ENCODE measurements at regions of chr1 and their contacts with region 1.

Region 1: DNA sequence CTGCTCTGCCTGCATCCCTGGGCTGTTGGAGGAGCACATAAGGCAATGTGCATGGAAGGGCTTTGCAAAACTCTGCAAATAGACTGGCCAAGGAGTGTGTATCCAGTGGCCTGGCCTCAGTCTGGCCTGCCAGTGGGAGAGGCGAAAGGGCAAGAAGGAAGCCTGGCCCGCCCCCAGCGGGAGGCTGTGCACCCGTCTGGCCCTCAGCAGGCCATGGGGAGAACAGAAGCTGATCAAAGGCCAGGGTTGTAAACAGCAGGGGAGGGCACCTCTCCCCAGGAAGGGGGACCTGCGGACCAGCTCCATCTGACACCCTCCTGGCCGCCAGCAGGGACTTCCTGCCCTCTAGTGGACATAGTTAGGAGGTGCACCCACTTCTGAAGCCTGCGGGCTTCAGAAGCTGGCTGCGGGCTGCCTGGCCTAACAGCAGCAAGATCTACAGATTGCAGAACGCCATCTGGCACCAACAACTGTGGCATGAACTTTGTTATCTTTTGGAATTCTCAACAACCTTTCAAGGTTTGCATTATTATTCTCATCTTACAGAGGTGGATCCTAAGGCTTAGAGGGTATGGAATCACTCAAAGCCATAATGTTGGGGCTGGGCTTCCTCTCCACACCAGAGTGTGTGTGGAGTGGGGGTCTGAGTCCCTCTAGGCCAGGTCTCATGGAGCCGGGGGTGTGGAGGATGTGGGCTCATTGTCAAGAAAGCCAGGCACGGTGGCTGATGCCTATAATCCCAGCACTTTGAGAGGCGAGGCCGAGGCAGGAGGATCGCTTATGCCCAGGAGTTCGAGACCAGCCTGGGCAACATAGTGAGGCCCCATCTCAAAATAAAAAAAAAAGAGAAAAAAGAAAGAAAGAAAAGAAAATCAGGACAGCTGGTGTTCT is 18.9 kb upstream of the CDK18 start:
- DNase-seq: peak; percentile 55
- H3K4me3 ChIP-seq: no peak overlapping the region
- H3K27ac ChIP-seq: no peak overlapping the region
- H3K4me1 ChIP-seq: no peaks in the 10 kb centered on the region
- H3K27me3 ChIP-seq: peaks cover 7 to 13% of the 10 kb centered on the region in 2 experiments
- CTCF ChIP-seq: peak; percentile 85 to 96
- POLR2A ChIP-seq: no peak

Region 2: GRCh38 chr1:204591594-204592051 is 894.0 kb before region 1 on chr1:
- CTCF ChIA-PET with region 1: no interaction called
- POLR2A ChIA-PET with region 1: no interaction called
- dilution Hi-C with region 1: no loop called
- intact Hi-C with region 1: no loop called
- DNase-seq: peak; percentile 24
- H3K4me3 ChIP-seq: no peak overlapping the region
- H3K27ac ChIP-seq: no peak overlapping the region
- H3K4me1 ChIP-seq: peaks cover 11% of the 10 kb centered on the region
- H3K27me3 ChIP-seq: no peaks in the 10 kb centered on the region
- CTCF ChIP-seq: no peak
- POLR2A ChIP-seq: no peak

Region 3: DNA sequence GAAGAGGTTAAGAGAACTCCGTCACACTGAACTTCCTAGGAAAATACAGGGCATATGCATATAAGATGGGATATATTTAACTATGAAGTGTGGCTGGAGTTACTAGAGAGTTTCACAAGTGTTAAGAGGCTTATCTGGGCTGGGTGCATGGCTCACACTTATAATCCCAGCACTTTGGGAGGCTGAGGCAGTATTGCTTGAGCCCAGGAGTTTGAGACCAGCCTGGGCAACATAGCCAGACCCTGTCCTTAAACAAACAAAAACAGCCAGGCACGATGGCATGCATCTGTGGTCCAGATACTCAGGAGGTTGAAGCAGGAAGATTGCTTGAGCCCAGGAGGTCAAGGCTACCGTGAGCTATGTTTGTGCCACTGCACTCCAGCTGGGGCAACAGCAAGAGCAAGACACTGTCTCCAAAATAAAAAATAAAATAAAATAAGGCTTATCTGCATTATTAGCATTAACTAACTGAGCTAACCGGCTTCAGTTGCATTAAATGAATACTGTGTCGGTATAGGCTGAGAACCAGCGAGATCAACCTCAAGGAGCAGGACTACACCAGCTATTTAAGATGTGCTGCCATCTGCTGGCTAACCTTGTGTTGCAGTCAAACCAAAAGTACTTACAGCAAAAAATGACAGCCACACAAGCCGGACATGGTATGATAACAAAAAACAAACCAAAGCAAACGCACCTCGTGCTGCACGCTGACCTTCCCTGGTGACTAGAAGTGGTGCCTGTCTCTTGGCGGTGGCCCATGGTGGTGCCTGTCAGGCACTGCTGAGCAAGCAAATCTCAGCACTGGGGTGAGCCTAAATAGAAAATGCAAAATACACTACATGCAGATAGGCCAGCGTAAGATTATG is 344.1 kb before region 1 on chr1:
- CTCF ChIA-PET with region 1: no interaction called
- POLR2A ChIA-PET with region 1: no interaction called
- dilution Hi-C with region 1: no loop called
- intact Hi-C with region 1: no loop called
- DNase-seq: peak; percentile 84
- H3K4me3 ChIP-seq: no peak overlapping the region
- H3K27ac ChIP-seq: no peak overlapping the region
- H3K4me1 ChIP-seq: peaks cover 19% of the 10 kb centered on the region
- H3K27me3 ChIP-seq: no peaks in the 10 kb centered on the region
- CTCF ChIP-seq: peak; percentile 77
- POLR2A ChIP-seq: no peak

Region 4: GRCh38 chr1:205335643-205336091 is 149.9 kb before region 1 on chr1:
- CTCF ChIA-PET with region 1: interaction called, 27 read pairs
- POLR2A ChIA-PET with region 1: no interaction called
- dilution Hi-C with region 1: no loop called
- intact Hi-C with region 1: loop called (anchors 1 kb)
- DNase-seq: peak; percentile 85
- H3K4me3 ChIP-seq: no peak overlapping the region
- H3K27ac ChIP-seq: no peak overlapping the region
- H3K4me1 ChIP-seq: no peaks in the 10 kb centered on the region
- H3K27me3 ChIP-seq: peaks cover 8 to 14% of the 10 kb centered on the region in 2 experiments
- CTCF ChIP-seq: peak; percentile 97
- POLR2A ChIP-seq: no peak

Region 5: DNA sequence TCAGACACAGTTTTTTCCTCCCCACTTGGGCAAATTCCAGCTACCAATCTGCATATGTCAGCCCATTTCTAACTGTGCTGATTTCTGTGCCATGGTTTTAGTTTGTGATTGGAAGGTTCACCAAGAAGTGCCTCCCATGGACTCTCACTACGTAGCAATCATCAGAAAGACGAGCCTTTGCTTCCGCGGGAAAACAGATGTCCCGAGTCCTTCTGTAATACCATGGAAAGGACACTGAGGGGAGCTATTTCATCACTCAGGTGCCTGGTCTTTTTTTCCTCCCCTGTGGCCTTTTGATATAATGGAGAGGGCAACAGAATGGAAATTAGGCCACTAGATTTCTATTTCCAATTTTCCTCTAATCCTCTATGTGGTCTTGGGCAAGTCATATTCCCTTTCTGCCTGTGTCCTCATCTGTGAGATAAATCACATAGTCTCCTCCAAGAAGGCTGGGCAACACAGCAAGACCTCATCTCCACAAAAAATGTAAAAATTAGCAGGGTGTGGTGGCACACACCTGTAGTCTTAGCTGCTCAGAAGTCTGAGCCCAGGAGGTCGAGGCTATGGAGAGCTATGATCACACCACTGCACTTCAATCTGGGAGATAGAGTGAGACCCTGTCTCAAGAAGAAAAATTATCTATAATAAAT is 88.5 kb before region 1 on chr1:
- CTCF ChIA-PET with region 1: interaction called, 130 read pairs
- POLR2A ChIA-PET with region 1: no interaction called
- dilution Hi-C with region 1: no loop called
- intact Hi-C with region 1: loop called (anchors 1 kb)
- DNase-seq: peak; percentile 35
- H3K4me3 ChIP-seq: no peak overlapping the region
- H3K27ac ChIP-seq: no peak overlapping the region
- H3K4me1 ChIP-seq: no peaks in the 10 kb centered on the region
- H3K27me3 ChIP-seq: peaks cover 8 to 19% of the 10 kb centered on the region in 2 experiments
- CTCF ChIP-seq: peak; percentile 52 to 54
- POLR2A ChIP-seq: no peak

Region 6: GRCh38 chr1:205430696-205431305 is 54.8 kb before region 1 on chr1:
- CTCF ChIA-PET with region 1: interaction called, 19 read pairs
- POLR2A ChIA-PET with region 1: no interaction called
- dilution Hi-C with region 1: no loop called
- intact Hi-C with region 1: no loop called
- DNase-seq: peak; percentile 59
- H3K4me3 ChIP-seq: peak overlapping the region; percentile 18 to 51 (median 34)
- H3K27ac ChIP-seq: no peak overlapping the region
- H3K4me1 ChIP-seq: no peaks in the 10 kb centered on the region
- H3K27me3 ChIP-seq: peaks cover 12 to 19% of the 10 kb centered on the region in 2 experiments
- CTCF ChIP-seq: peak; percentile 67 to 79
- POLR2A ChIP-seq: no peak

Region 7: GRCh38 chr1:205505791-205506190 is 20.2 kb after region 1 on chr1:
- CTCF ChIA-PET with region 1: interaction called, 96 read pairs
- POLR2A ChIA-PET with region 1: no interaction called
- dilution Hi-C with region 1: no loop called
- intact Hi-C with region 1: no loop called
- DNase-seq: no peak
- H3K4me3 ChIP-seq: no peak overlapping the region
- H3K27ac ChIP-seq: no peak overlapping the region
- H3K4me1 ChIP-seq: no peaks in the 10 kb centered on the region
- H3K27me3 ChIP-seq: peaks cover 29 to 35% of the 10 kb centered on the region in 2 experiments
- CTCF ChIP-seq: no peak
- POLR2A ChIP-seq: no peak

Measured in endothelial cell of umbilical vein (primary cell).